Posterior cingulate gyrus (tissue), 11 donors: ENCODE measurements at regions of chr15 and their contacts with region 1.

Region 1: DNA sequence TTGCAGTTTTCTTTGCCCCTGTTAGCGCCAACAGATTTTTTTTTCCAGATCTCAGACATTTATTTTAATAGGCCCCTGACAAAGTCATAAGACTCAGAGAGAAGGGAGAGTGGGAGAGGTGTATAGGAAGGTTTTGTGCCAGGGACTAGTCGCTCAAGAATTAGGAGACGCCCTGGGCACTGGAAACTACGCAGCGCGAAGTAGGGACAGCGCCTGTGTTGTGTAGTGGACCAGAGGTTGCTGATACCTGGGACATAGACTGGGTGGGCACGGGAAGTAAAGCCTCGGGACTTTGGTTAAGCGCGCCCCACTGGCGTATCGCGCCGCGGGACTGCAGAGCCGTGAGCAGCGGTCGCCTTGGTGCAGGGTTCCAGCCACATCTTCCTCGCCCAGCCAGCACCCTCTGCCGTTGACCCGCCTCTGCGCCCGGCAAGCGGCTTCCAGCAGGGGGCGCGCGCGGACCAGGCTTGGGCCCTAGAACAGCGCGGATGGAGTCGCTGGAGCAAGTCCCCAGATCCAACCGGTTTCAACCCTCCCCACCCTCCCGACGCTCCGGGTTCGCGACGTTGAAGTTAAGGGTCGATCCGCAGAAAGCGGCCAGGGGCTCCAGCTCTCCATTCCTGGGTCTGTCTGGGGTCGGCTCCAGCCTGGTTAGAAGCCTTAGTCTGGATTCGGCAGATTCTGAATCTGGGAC is 3.0 kb upstream of the ISLR2 start:
- DNase-seq: peak; percentile 81 to 99 (median 92)

Region 2: DNA sequence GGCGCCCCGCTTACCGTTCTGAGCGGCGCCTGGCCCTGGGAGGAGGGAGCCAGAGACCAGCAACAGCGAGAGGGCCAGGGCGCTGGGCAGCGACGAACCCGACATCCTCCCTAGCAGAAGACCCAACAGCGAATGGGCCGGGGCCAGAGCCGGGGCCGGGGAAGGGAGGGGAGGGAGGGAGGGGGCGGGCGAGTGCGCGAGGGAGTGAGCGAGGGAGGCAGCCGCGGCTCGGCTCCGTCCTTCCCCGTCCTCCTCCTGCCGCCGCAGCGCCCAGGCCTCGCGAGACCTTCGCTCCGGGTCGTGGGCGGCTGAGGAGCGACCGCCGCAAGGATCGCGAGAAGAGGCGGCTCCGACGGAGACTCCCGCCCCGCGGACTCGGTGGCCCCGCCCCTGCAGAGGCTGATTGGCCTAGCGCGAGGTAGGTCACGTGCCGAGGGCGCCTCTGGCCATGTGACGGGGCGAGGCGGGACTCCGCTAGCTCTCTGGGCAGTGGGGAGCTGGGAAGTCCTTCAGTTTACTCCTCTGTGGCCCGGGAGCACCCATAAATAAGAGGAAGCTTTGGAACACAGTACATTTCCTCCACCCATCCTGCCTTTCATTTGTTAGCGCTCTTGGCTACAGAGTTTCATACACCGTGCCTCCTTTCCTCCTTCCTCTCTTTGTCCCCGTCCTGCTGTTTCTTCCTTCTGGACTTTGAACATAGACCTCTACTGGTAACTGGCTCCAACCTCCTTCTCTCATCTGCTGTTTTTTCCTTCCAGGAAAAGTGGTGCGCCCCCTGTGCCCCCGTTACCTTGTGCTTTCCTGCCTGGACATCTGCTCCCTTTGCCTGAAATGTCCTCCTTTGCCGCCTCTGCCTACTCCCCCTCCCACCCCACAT is 494.1 kb before region 1 on chr15 and contains the start of gene NPTN:
- intact Hi-C with region 1: no loop called
- DNase-seq: peak; percentile 99 to 100 (median 99)

Region 3: GRCh38 chr15:74307827-74308644 is 180.6 kb after region 1 on chr15:
- intact Hi-C with region 1: loop called (anchors 1 kb)
- DNase-seq: peak in 9 of 10 donors; percentile 21 to 93 (median 59)

Region 4: DNA sequence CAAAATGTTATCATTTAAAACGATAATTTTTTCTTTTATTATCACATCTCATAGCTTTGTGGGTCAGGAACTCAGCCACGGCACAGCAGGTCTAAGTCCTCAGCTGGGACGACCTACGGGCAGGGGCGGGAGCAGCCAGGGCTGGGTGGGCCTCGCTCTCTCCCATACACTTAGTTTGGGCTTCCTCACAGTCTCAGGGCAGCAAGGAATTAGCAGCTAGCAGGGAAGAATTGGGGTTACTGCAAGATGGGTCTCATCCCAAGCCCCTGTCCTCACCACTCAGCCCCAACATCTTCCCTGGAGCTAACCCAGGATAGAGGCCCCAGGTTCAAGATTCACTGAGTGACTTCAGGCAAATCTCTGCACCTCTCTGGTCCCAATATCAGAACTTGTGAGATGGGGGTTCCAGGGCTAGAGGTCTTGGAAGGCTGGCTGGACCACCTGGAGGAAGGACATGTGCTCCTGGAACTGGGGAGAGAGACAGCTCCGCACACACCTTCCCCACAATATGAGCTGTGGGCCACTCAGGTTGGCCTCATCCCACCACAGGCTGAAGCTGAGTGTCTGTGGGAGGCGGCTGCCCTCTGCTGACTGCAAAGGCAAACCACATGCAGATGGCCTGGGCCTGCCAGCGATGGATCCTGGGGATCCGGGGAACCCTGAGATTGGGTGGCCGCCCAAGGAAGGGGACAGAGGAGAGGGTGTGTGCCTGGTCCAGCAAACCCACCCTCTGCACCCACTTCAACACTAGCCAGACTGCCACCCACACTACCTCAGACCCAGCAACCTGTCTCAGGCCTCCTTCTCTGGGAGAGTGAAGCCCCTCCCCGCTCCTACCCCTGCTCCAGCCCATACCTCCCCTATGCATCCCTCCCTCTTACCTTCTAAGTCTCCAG is 195.0 kb after region 1 on chr15:
- intact Hi-C with region 1: loop called (anchors 1 kb)
- DNase-seq: peak; percentile 58 to 96 (median 71)